Activated T-helper 2 cell treated with anti-CD3 and anti-CD28 coated beads, Interferon-gamma antibody, Interleukin-2, Interleukin-4, amounts not matched to agents 10 μg/mL and 5 μg/mL and 100 μg/mL, durations not matched to agents 14 hours and 24 hours and 36 hours (primary cell): ENCODE measurements at regions of chr17 and their contacts with region 1.

Region 1: GRCh38 chr17:30336369-30337171 is 2.7 kb upstream of the TMIGD1 start:
- DNase-seq: peak; percentile 44
- H3K4me3 Mint-ChIP-seq: no peak overlapping the region
- H3K27ac Mint-ChIP-seq: no peak overlapping the region
- H3K4me1 Mint-ChIP-seq: peaks cover 32% of the 10 kb centered on the region
- H3K27me3 Mint-ChIP-seq: peaks cover 7% of the 10 kb centered on the region

Region 2: DNA sequence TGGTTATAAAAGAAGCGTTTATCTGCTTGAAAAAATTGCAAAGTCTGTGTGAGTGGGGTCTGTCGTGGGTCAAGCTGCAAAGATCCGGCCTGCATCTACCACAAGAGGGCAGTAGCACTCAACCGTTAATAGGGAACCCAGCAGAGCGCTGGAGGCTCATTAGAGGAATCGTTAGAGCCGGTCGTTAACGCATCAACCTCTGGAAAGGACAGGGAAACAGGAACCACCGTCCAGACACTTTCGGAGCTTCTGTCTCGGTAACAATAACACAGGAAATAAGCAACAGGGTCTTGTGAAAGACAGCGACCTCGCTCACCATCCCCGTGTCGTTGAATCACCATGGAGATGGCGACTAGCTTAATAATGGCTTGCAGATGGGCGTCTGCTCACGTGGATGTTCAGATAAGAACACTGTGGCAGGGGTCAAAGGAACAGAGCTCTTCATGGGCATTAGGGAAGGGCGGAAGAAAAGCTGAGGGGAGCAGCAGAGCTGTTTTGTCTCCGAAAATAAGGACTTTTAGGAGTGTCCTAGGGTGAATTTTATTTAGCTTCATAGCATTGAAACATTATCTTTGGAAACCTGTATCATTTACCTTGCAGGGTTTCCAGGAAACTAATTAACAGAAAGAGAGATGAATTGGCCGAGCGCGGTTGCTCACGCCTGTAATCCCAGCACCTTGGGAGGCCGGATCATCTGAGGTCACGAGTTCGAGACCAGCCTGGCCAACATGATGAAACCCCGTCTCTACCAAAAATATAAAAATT is 231.8 kb before region 1 on chr17:
- intact Hi-C with region 1: loop called (anchors 1 kb)
- DNase-seq: peak; percentile 52
- H3K4me3 Mint-ChIP-seq: peak overlapping the region; percentile 71
- H3K27ac Mint-ChIP-seq: peak overlapping the region; percentile 16
- H3K4me1 Mint-ChIP-seq: peaks cover 4% of the 10 kb centered on the region
- H3K27me3 Mint-ChIP-seq: peaks cover 15% of the 10 kb centered on the region

Region 3: DNA sequence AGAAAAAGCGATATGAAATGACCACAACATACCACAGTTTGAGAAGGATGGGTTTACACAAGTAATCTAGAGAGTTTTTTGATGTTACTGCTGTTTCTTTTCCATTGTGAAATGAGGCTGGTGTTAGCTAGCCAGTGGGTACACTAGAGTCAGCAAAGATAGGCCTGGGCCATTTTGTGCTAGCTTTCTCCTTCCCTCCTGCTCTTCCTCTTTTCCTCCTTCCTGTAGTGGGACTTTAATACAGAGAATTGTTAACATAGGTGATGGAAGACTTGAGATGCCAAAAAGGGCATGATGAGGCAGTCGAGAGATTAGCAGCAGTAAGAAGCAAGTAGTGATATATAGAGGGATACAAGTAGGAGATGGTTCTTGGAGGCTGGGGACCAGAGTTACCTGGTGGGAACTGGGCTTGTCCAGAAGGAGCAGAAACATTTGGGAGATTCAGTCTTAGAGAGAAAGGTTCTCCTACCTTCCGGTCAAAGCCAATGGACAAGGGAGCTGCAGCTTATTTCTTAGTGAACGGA is 212.2 kb before region 1 on chr17:
- intact Hi-C with region 1: loop called (anchors 1 kb)
- DNase-seq: no peak
- H3K4me3 Mint-ChIP-seq: no peak overlapping the region
- H3K27ac Mint-ChIP-seq: peak overlapping the region; percentile 21
- H3K4me1 Mint-ChIP-seq: peaks cover 30% of the 10 kb centered on the region
- H3K27me3 Mint-ChIP-seq: no peaks in the 10 kb centered on the region

Region 4: DNA sequence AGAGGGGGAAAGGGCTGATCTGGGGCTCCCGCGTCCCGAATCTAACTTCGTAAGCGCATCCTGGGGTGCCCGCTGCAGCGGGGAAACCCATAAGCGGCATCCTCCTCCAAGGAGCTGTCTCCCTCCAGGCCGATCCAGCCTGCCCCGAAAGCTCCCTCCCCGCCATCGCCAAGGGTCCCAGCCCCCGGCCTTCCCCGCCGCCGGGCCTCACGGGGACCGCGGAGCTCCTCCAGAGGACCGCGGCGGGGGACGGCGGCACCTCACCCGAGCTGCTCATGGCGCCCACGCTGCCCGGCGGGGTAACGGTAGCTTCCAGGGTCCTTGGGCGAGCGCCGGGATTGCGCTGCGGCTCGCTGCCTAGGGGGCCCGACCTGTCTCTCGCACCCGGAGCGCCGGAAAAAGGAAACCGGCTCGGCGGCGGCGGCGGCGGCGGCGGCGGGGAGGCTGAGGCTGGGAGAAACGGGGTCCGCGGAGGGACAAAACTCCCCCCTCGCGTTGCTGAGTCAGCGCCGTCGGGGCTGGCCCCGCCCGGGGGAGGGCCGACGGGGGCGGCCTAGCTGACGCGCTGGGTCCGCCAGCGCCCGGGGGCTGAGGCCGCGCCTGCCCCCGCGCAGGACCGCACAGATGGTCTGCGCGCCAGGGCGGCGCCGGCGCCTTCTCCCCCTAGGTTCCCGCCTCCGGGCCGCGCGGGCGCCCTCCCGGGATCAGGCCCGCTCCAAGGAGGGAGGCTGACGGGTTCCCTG is 44.9 kb before region 1 on chr17 and contains the start of gene BLMH:
- intact Hi-C with region 1: loop called (anchors 1 kb)
- DNase-seq: peak; percentile 79
- H3K4me3 Mint-ChIP-seq: peak within 1 kb of the TSS; percentile 90
- H3K27ac Mint-ChIP-seq: peak within 1 kb of the TSS; percentile 88
- H3K4me1 Mint-ChIP-seq: peaks cover 13% of the 10 kb centered on the region
- H3K27me3 Mint-ChIP-seq: no peaks in the 10 kb centered on the region
- total RNA-seq, gene BLMH: 68.9 and 72.2 TPM in 2 replicates

Region 5: GRCh38 chr17:30378824-30379302 is 42.3 kb after region 1 on chr17 and contains the start of gene CPD:
- intact Hi-C with region 1: loop called (anchors 2 kb)
- DNase-seq: peak; percentile 95
- H3K4me3 Mint-ChIP-seq: peak within 1 kb of the TSS; percentile 85
- H3K27ac Mint-ChIP-seq: peak within 1 kb of the TSS; percentile 82
- H3K4me1 Mint-ChIP-seq: peaks cover 52% of the 10 kb centered on the region
- H3K27me3 Mint-ChIP-seq: peaks cover 3% of the 10 kb centered on the region
- total RNA-seq, gene CPD: 26.0 and 31.5 TPM in 2 replicates